ENCODE measurements at regions of chr16 and their contacts with region 1.

Region 1: GRCh38 chr16:53130159-53131049 is 75.6 kb downstream of the CHD9 start:
- DNase-seq: peak; percentile 78
- ATAC-seq: peak; percentile 90
- H3K4me3 ChIP-seq: peak overlapping the region; percentile 40 to 65
- H3K27ac ChIP-seq: peak overlapping the region; percentile 87; the same call in 1 of the 2 replicates
- H3K4me1 ChIP-seq: peaks cover 2 to 6% of the 10 kb centered on the region in 2 experiments
- H3K27me3 ChIP-seq: no peaks in the 10 kb centered on the region
- CTCF ChIP-seq: peak; percentile 9 to 58 (median 25); a peak in 3 of 6 replicates
- POLR2A ChIP-seq: no peak
- RAD21 ChIP-seq: peak; percentile 59

Region 2: GRCh38 chr16:53014287-53014686 is 116.1 kb before region 1 on chr16:
- CTCF ChIA-PET with region 1: no interaction called
- POLR2A ChIA-PET with region 1: no interaction called
- RAD21 ChIA-PET with region 1: no interaction called
- intact Hi-C with region 1: no loop called
- DNase-seq: no peak
- ATAC-seq: no peak
- H3K4me3 ChIP-seq: no peak overlapping the region
- H3K27ac ChIP-seq: no peak overlapping the region
- H3K4me1 ChIP-seq: no peaks in the 10 kb centered on the region
- H3K27me3 ChIP-seq: 0 out of 2 replicates have a peak, but pooled peaks cover 12% of the 10 kb centered on the region
- CTCF ChIP-seq: no peak
- POLR2A ChIP-seq: no peak
- RAD21 ChIP-seq: no peak

Region 3: GRCh38 chr16:53091466-53092211 is 38.8 kb before region 1 on chr16:
- CTCF ChIA-PET with region 1: no interaction called
- POLR2A ChIA-PET with region 1: no interaction called
- RAD21 ChIA-PET with region 1: no interaction called
- intact Hi-C with region 1: no loop called
- DNase-seq: no peak
- ATAC-seq: no peak
- H3K4me3 ChIP-seq: no peak overlapping the region
- H3K27ac ChIP-seq: no peak overlapping the region
- H3K4me1 ChIP-seq: peaks cover 17 to 32% of the 10 kb centered on the region in 2 experiments
- H3K27me3 ChIP-seq: no peaks in the 10 kb centered on the region
- CTCF ChIP-seq: no peak
- POLR2A ChIP-seq: no peak
- RAD21 ChIP-seq: no peak

Region 4: GRCh38 chr16:53207810-53208752 is 77.7 kb after region 1 on chr16:
- CTCF ChIA-PET with region 1: no interaction called
- POLR2A ChIA-PET with region 1: no interaction called
- RAD21 ChIA-PET with region 1: no interaction called
- intact Hi-C with region 1: loop called (anchors 5 kb)
- DNase-seq: peak; percentile 19
- ATAC-seq: peak; percentile 80
- H3K4me3 ChIP-seq: no peak overlapping the region
- H3K27ac ChIP-seq: no peak overlapping the region
- H3K4me1 ChIP-seq: peaks cover 0 to 7% of the 10 kb centered on the region in 2 experiments; a peak in 1 of 4 replicates
- H3K27me3 ChIP-seq: no peaks in the 10 kb centered on the region
- CTCF ChIP-seq: peak; percentile 41 to 58 (median 45); a peak in 4 of 6 replicates
- POLR2A ChIP-seq: peak; percentile 51
- RAD21 ChIP-seq: peak; percentile 54

Region 5: GRCh38 chr16:53266156-53266555 is 135.8 kb after region 1 on chr16:
- CTCF ChIA-PET with region 1: no interaction called
- POLR2A ChIA-PET with region 1: no interaction called
- RAD21 ChIA-PET with region 1: no interaction called
- intact Hi-C with region 1: loop called (anchors 5 kb)
- DNase-seq: no peak
- ATAC-seq: no peak
- H3K4me3 ChIP-seq: no peak overlapping the region
- H3K27ac ChIP-seq: no peak overlapping the region
- H3K4me1 ChIP-seq: no peaks in the 10 kb centered on the region
- H3K27me3 ChIP-seq: no peaks in the 10 kb centered on the region
- CTCF ChIP-seq: no peak
- POLR2A ChIP-seq: no peak
- RAD21 ChIP-seq: no peak

Region 6: GRCh38 chr16:53495325-53495724 is 364.9 kb after region 1 on chr16:
- CTCF ChIA-PET with region 1: no interaction called
- POLR2A ChIA-PET with region 1: no interaction called
- RAD21 ChIA-PET with region 1: no interaction called
- intact Hi-C with region 1: loop called (anchors 10 kb)
- DNase-seq: no peak
- ATAC-seq: peak; percentile 75
- H3K4me3 ChIP-seq: no peak overlapping the region
- H3K27ac ChIP-seq: no peak overlapping the region
- H3K4me1 ChIP-seq: no peaks in the 10 kb centered on the region
- H3K27me3 ChIP-seq: no peaks in the 10 kb centered on the region
- CTCF ChIP-seq: peak in 2 of 3 experiments; percentile 33 to 40; a peak in 4 of 6 replicates
- POLR2A ChIP-seq: no peak
- RAD21 ChIP-seq: no peak

Region 7: DNA sequence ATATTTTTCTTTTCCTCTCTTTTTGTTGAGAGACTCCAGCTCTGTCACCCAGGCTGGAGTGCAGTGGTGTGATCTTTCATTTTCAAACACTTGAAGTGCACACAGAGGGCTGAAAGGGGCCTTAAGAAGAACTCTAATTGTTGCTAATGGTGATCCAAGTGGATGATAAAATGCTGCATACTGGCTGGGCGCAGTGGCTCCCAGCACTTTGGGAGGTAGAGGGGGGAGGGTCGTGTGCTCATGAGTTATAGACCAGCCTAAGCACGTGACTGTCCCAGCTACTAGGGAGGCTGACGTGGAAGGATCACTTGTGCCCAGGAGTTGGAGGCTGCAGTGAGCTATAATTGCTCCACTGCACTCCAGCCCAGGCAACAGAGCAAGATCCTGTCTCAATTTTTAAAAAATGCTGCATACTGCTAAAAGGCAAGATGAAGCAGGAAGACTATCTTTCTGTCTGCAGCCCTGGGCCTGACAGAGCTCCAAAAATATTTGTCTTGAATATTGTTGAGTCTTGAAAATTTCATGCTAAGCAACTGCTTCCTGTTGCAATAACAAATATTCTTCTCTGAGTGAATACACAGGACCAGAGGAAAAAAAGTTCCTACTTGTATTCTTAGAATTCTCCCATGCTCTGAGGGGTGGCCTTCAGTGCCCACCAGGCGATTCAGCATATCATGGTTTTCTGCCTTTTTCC is 436.3 kb after region 1 on chr16:
- CTCF ChIA-PET with region 1: no interaction called
- POLR2A ChIA-PET with region 1: no interaction called
- RAD21 ChIA-PET with region 1: no interaction called
- intact Hi-C with region 1: no loop called
- DNase-seq: no peak
- ATAC-seq: no peak
- H3K4me3 ChIP-seq: no peak overlapping the region
- H3K27ac ChIP-seq: no peak overlapping the region
- H3K4me1 ChIP-seq: no peaks in the 10 kb centered on the region
- H3K27me3 ChIP-seq: no peaks in the 10 kb centered on the region
- CTCF ChIP-seq: no peak
- POLR2A ChIP-seq: no peak
- RAD21 ChIP-seq: no peak

Measured in HCT116 (cell line).